Caco-2 (cell line): ENCODE measurements at regions of chr20 and their contacts with region 1.

Region 1: DNA sequence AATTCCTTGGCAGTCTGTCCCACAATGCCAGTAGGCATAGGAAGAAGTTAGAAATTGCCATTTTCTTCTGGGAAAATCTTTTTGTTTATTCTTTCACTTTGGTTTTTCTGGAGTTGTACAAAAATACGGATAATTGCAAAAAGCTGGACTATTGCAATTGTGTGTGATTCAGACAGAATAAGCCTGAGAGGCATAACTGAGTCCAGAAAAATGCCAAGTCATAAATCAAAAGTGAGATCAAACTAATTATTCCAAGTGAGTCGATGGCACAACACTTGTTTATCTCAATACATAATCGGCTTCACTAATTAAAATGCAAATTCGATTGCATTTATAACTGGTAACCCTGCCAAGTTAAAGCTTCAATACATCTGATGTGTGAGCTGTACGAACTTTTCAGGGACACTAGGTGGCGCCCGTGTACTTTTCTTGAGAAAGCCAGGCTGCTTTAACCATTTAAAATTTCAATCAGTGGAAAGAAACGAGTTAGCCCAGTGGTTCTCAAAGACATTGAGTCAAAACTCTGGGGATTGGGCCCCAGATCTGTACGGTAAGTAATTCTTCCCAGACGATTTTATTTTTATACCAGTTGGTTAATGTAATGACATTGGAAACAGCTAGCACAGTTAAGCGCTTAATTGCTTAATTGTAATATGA is 102.6 kb downstream of the LAMP5 start:
- DNase-seq: peak; percentile 47 to 60
- H3K4me3 ChIP-seq: no peak overlapping the region
- H3K4me3 Mint-ChIP-seq: no peak overlapping the region
- H3K27ac Mint-ChIP-seq: no peak overlapping the region
- H3K4me1 ChIP-seq: no peaks in the 10 kb centered on the region
- H3K4me1 Mint-ChIP-seq: peaks cover 15% of the 10 kb centered on the region
- H3K27me3 ChIP-seq: no peaks in the 10 kb centered on the region; the same call in 1 of the 2 replicates
- H3K27me3 Mint-ChIP-seq: peaks cover 17% of the 10 kb centered on the region
- CTCF ChIP-seq: peak; percentile 82 to 92

Region 2: GRCh38 chr20:9407805-9408421 is 209.0 kb before region 1 on chr20:
- CTCF ChIA-PET with region 1: interaction called, 25 read pairs
- POLR2A ChIA-PET with region 1: no interaction called
- intact Hi-C with region 1: no loop called
- DNase-seq: peak; percentile 66 to 76
- H3K4me3 ChIP-seq: no peak overlapping the region
- H3K4me3 Mint-ChIP-seq: no peak overlapping the region
- H3K27ac Mint-ChIP-seq: no peak overlapping the region
- H3K4me1 ChIP-seq: no peaks in the 10 kb centered on the region
- H3K4me1 Mint-ChIP-seq: no peaks in the 10 kb centered on the region
- H3K27me3 ChIP-seq: no peaks in the 10 kb centered on the region
- H3K27me3 Mint-ChIP-seq: no peaks in the 10 kb centered on the region
- CTCF ChIP-seq: peak; percentile 79 to 81

Region 3: GRCh38 chr20:9884061-9884460 is 267.1 kb after region 1 on chr20:
- CTCF ChIA-PET with region 1: interaction called, 5 read pairs
- POLR2A ChIA-PET with region 1: no interaction called
- intact Hi-C with region 1: loop called (anchors 1 kb)
- DNase-seq: no peak
- H3K4me3 ChIP-seq: no peak overlapping the region
- H3K4me3 Mint-ChIP-seq: no peak overlapping the region
- H3K27ac Mint-ChIP-seq: no peak overlapping the region
- H3K4me1 ChIP-seq: no peaks in the 10 kb centered on the region
- H3K4me1 Mint-ChIP-seq: no peaks in the 10 kb centered on the region
- H3K27me3 ChIP-seq: no peaks in the 10 kb centered on the region
- H3K27me3 Mint-ChIP-seq: no peaks in the 10 kb centered on the region
- CTCF ChIP-seq: peak; percentile 10 to 30

Region 4: DNA sequence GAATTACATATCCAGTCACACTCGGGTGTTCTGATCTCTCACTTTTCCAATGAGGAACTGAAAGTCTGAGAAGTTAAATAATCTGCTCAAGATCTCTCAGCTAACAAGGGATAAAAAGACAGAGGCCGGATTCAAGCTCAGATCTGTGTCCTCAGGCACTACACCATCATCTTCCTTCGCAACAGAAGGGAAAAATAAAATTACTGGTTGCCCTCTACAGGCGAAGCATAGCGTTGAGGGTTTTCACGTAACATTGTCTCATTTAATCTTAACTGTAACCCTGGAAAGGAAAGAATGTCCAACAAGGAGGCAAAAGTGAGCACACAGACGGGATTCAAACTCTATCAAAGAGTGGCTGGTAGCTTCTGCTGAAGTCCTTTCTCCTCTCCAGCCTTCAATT is 350.0 kb after region 1 on chr20:
- CTCF ChIA-PET with region 1: interaction called, 3 read pairs
- POLR2A ChIA-PET with region 1: no interaction called
- intact Hi-C with region 1: loop called (anchors 1 kb)
- DNase-seq: no peak
- H3K4me3 ChIP-seq: no peak overlapping the region
- H3K4me3 Mint-ChIP-seq: no peak overlapping the region
- H3K27ac Mint-ChIP-seq: no peak overlapping the region
- H3K4me1 ChIP-seq: no peaks in the 10 kb centered on the region
- H3K4me1 Mint-ChIP-seq: no peaks in the 10 kb centered on the region
- H3K27me3 ChIP-seq: no peaks in the 10 kb centered on the region
- H3K27me3 Mint-ChIP-seq: peaks cover 8% of the 10 kb centered on the region
- CTCF ChIP-seq: peak; percentile 25 to 29

Region 5: GRCh38 chr20:10225439-10226060 is 608.6 kb after region 1 on chr20:
- CTCF ChIA-PET with region 1: no interaction called
- POLR2A ChIA-PET with region 1: no interaction called
- intact Hi-C with region 1: loop called (anchors 2 kb)
- DNase-seq: peak in 1 of 2 experiments; percentile 24
- H3K4me3 ChIP-seq: no peak overlapping the region
- H3K4me3 Mint-ChIP-seq: no peak overlapping the region
- H3K27ac Mint-ChIP-seq: no peak overlapping the region
- H3K4me1 ChIP-seq: no peaks in the 10 kb centered on the region
- H3K4me1 Mint-ChIP-seq: no peaks in the 10 kb centered on the region
- H3K27me3 ChIP-seq: no peaks in the 10 kb centered on the region
- H3K27me3 Mint-ChIP-seq: peaks cover 12% of the 10 kb centered on the region
- CTCF ChIP-seq: peak; percentile 44 to 65

Region 6: GRCh38 chr20:10427060-10427692 is 810.2 kb after region 1 on chr20:
- CTCF ChIA-PET with region 1: no interaction called
- POLR2A ChIA-PET with region 1: no interaction called
- intact Hi-C with region 1: loop called (anchors 5 kb)
- DNase-seq: peak; percentile 48
- H3K4me3 ChIP-seq: no peak overlapping the region
- H3K4me3 Mint-ChIP-seq: no peak overlapping the region
- H3K27ac Mint-ChIP-seq: no peak overlapping the region
- H3K4me1 ChIP-seq: peaks cover 17% of the 10 kb centered on the region
- H3K4me1 Mint-ChIP-seq: peaks cover 20% of the 10 kb centered on the region
- H3K27me3 ChIP-seq: no peaks in the 10 kb centered on the region
- H3K27me3 Mint-ChIP-seq: no peaks in the 10 kb centered on the region
- CTCF ChIP-seq: peak; percentile 71 to 84